Right lobe of liver (tissue), 6 donors: ENCODE measurements at regions of chrX and their contacts with region 1.

Region 1: GRCh38 chrX:85544609-85545008 is 165.1 kb upstream of the POF1B start:
- DNase-seq: no peak
- ATAC-seq: no peak
- H3K4me3 ChIP-seq: no peak overlapping the region
- H3K27ac ChIP-seq: no peak overlapping the region
- H3K4me1 ChIP-seq: no peaks in the 10 kb centered on the region
- H3K27me3 ChIP-seq: peaks cover 0 to 5% of the 10 kb centered on the region in 2 donors
- CTCF ChIP-seq: peak; percentile 13 to 54 (median 48)
- POLR2A ChIP-seq: no peak

Region 2: DNA sequence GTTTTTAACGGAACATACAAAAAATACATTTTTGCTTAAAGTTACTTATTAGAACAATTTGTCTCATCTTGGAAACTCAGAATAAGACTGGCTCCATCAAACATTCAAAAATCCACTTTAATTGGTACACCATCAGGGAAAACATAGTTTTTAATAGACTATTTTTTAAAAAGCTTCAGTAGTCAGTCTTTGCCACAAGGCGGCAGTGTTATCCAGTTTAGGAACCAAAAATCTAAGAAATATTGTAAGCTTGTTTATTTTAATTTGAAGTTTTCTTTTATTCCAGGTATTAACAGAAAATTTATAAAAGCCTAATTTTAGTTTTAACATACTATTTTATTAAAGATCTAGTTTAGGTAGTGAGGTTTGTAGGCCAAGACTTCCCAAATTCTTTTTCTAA is 433.3 kb before region 1 on chrX:
- intact Hi-C with region 1: loop called in 1 of 2 experiments (anchors 10 kb)
- DNase-seq: no peak
- ATAC-seq: peak in 1 of 4 donors; percentile 45
- H3K4me3 ChIP-seq: no peak overlapping the region
- H3K27ac ChIP-seq: no peak overlapping the region
- H3K4me1 ChIP-seq: peaks cover 0 to 4% (median 0%) of the 10 kb centered on the region in 4 donors
- H3K27me3 ChIP-seq: no peaks in the 10 kb centered on the region
- CTCF ChIP-seq: peak; percentile 48 to 82 (median 77)
- POLR2A ChIP-seq: no peak

Region 3: DNA sequence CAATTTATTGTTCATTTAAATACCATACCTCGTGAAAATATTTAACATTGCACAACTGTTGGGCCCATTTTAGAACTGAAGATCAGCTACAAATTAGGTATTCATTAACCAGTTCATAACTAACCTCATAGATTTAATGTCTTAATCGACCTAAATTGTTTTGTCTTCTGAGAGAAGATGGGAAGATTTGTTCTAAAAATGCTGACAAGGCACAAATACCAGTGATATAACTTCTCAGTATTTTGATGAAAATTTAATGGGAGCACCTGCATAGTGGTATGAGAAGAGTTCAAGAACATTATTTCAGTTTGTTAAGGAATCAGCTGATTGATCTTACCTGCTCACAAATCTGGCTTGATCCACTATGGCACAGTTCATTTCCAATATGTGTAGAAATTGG is 199.1 kb before region 1 on chrX:
- intact Hi-C with region 1: no loop called
- DNase-seq: no peak
- ATAC-seq: no peak
- H3K4me3 ChIP-seq: no peak overlapping the region
- H3K27ac ChIP-seq: no peak overlapping the region
- H3K4me1 ChIP-seq: no peaks in the 10 kb centered on the region
- H3K27me3 ChIP-seq: no peaks in the 10 kb centered on the region
- CTCF ChIP-seq: no peak
- POLR2A ChIP-seq: no peak

Region 4: GRCh38 chrX:85627363-85627762 is 82.8 kb after region 1 on chrX:
- intact Hi-C with region 1: no loop called
- DNase-seq: no peak
- ATAC-seq: no peak
- H3K4me3 ChIP-seq: no peak overlapping the region
- H3K27ac ChIP-seq: no peak overlapping the region
- H3K4me1 ChIP-seq: no peaks in the 10 kb centered on the region
- H3K27me3 ChIP-seq: no peaks in the 10 kb centered on the region
- CTCF ChIP-seq: peak in 3 of 4 donors; percentile 19 to 44 (median 41)
- POLR2A ChIP-seq: no peak